Dendritic cell treated with granulocyte-macrophage colony-stimulating factor and Interleukin-4, amounts not matched to agents 40 ng/mL and 50 ng/mL, for 4 days (primary cell): ENCODE measurements at regions of chrX and their contacts with region 1.

Region 1: GRCh38 chrX:40792433-40792832 is 57.1 kb upstream of the MED14 start:
- H3K4me3 Mint-ChIP-seq: no peak overlapping the region
- H3K27ac Mint-ChIP-seq: no peak overlapping the region
- H3K4me1 Mint-ChIP-seq: peaks cover 21% of the 10 kb centered on the region
- H3K27me3 Mint-ChIP-seq: no peaks in the 10 kb centered on the region

Region 2: GRCh38 chrX:40647307-40648197 is 144.9 kb before region 1 on chrX and contains the start of gene CXorf38:
- intact Hi-C with region 1: loop called (anchors 10 kb)
- H3K4me3 Mint-ChIP-seq: peak within 1 kb of the TSS; percentile 93
- H3K27ac Mint-ChIP-seq: peak within 1 kb of the TSS; percentile 95
- H3K4me1 Mint-ChIP-seq: peaks cover 18% of the 10 kb centered on the region
- H3K27me3 Mint-ChIP-seq: no peaks in the 10 kb centered on the region

Region 3: GRCh38 chrX:40719218-40719617 is 73.2 kb before region 1 on chrX:
- intact Hi-C with region 1: loop called (anchors 5 kb)
- H3K4me3 Mint-ChIP-seq: no peak overlapping the region
- H3K27ac Mint-ChIP-seq: no peak overlapping the region
- H3K4me1 Mint-ChIP-seq: peaks cover 16% of the 10 kb centered on the region
- H3K27me3 Mint-ChIP-seq: no peaks in the 10 kb centered on the region

Region 4: GRCh38 chrX:40735325-40736169 is 56.9 kb before region 1 on chrX and contains the start of gene MED14:
- intact Hi-C with region 1: loop called (anchors 5 kb)
- H3K4me3 Mint-ChIP-seq: peak within 1 kb of the TSS; percentile 98
- H3K27ac Mint-ChIP-seq: peak within 1 kb of the TSS; percentile 100
- H3K4me1 Mint-ChIP-seq: peaks cover 26% of the 10 kb centered on the region
- H3K27me3 Mint-ChIP-seq: no peaks in the 10 kb centered on the region

Region 5: DNA sequence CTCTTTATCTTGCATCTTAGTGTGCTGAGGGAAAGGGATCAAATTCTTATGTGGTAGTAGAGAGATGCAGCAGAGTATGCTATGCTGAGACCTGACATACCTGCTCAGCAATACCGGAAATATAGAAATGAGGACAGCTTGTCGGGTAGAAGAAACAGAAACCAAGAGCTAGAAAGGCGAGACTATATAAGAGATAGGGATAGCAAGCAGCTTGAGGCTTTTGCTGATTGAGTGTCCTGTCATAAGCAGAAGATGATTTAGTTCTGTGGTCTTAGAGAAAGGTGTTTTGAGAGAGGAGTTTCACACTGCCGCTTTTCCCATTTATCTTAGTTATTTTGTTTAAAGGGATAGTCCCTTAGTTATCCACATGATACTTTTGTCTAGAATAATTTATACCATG is 324.5 kb after region 1 on chrX:
- intact Hi-C with region 1: loop called (anchors 10 kb)
- H3K4me3 Mint-ChIP-seq: no peak overlapping the region
- H3K27ac Mint-ChIP-seq: no peak overlapping the region
- H3K4me1 Mint-ChIP-seq: peaks cover 22% of the 10 kb centered on the region
- H3K27me3 Mint-ChIP-seq: no peaks in the 10 kb centered on the region